OCI-LY7 (cell line): ENCODE measurements at regions of chr3 and their contacts with region 1.

Region 1: GRCh38 chr3:11601446-11602238 is 42.1 kb downstream of the VGLL4 start:
- DNase-seq: peak; percentile 92
- H3K4me3 ChIP-seq: peak overlapping the region; percentile 52
- H3K27ac ChIP-seq: peak overlapping the region; percentile 91
- H3K4me1 ChIP-seq: peaks cover 77% of the 10 kb centered on the region
- CTCF ChIP-seq: no peak

Region 2: DNA sequence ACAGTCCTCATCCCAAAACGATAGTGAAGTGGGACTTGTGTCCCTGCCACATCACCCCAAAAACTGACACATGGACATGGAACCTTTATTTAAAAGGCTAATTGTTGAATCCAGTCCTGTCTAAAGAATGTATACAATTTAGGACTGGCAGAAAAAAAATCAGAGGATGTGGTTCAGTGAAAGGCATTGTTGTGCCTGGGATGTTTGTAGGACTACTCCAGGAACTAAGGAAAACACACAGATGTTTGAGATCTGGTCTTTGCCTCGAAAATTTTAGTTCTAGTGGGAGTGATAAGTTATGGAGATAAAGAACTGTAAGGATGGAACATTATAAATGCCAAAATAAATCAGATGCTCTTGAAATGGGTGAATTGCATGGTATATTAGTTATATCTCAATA is 14.9 kb after region 1 on chr3:
- CTCF ChIA-PET with region 1: interaction called, 3 read pairs
- POLR2A ChIA-PET with region 1: interaction called, 16 read pairs
- intact Hi-C with region 1: no loop called
- DNase-seq: no peak
- H3K4me3 ChIP-seq: no peak overlapping the region
- H3K27ac ChIP-seq: no peak overlapping the region
- H3K4me1 ChIP-seq: peaks cover 14% of the 10 kb centered on the region
- CTCF ChIP-seq: no peak

Region 3: DNA sequence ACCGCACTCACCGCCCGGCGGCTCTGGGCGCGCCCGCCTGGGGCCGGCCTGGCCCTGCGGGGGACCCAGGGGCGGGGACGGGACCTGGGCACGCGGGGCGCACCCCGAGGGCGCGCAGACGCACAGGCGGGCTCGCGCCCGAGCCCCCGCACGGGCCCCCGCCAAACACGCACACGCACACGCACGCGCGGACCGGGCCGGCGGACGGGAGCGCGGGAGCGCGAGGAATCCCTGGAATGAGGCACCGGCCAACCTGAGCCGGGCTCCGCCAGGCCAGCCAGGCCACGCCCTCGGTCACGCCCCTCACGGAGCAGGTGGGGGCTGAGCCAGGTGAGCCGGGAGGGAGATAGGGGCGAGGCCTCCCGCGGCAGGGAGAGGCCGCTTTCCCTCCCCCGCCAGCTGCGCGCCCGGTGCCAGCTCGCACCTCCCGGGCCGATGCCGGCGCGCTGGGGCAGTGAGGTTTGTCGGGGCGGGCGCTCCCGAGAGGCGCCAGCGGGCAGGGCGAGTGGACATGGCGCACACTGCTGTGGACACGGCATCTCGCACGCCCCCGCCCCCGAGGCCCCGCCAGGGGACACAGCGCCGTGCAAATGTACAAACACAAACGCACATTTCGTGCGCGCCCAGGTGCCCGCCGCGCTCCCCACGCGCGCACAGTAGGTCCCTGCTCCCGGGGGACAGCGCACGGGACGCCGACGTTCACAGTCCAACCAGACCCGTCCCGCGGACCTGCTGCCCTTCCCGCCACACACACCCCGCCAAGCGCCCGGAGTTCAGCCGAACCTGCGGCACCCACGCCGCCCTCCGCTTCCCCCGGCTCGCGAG is 118.0 kb after region 1 on chr3:
- CTCF ChIA-PET with region 1: no interaction called
- POLR2A ChIA-PET with region 1: no interaction called
- intact Hi-C with region 1: loop called (anchors 5 kb)
- DNase-seq: peak; percentile 88
- H3K4me3 ChIP-seq: peak overlapping the region; percentile 75
- H3K27ac ChIP-seq: peak overlapping the region; percentile 90
- H3K4me1 ChIP-seq: peaks cover 27% of the 10 kb centered on the region
- CTCF ChIP-seq: no peak